H1 (cell line): ENCODE measurements at regions of chr12 and their contacts with region 1.

Region 1: GRCh38 chr12:108457006-108457733 is 57.9 kb upstream of the FICD start:
- DNase-seq: peak in 1 of 2 experiments; percentile 52
- H3K4me3 ChIP-seq: no peak overlapping the region
- H3K27ac ChIP-seq: no peak overlapping the region
- H3K4me1 ChIP-seq: peaks cover 0 to 3% (median 0%) of the 10 kb centered on the region in 4 experiments; a peak in 2 of 7 replicates
- H3K27me3 ChIP-seq: no peaks in the 10 kb centered on the region
- CTCF ChIP-seq: peak in 2 of 3 experiments; percentile 84 to 91; a peak in 3 of 4 replicates
- EP300 ChIP-seq: no peak
- POLR2A ChIP-seq: no peak
- RAD21 ChIP-seq: peak; percentile 87 to 94

Region 2: DNA sequence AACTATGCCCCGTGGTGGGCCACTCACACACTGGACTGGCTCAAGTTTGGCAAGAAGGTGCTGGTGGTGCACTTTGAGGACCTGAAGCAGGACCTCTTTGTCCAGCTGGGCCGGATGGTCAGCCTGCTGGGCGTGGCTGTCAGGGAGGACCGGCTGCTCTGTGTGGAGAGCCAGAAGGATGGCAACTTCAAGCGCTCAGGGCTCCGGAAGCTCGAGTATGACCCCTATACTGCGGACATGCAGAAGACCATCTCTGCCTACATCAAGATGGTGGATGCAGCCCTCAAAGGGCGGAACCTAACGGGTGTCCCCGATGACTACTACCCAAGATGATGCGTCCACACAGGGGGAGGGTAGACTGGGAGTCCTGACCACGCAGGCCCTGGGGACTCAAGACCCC is 209.2 kb before region 1 on chr12:
- CTCF ChIA-PET with region 1: interaction called, 12 read pairs
- POLR2A ChIA-PET with region 1: no interaction called
- DNase-seq: no peak
- H3K4me3 ChIP-seq: no peak overlapping the region
- H3K27ac ChIP-seq: no peak overlapping the region
- H3K4me1 ChIP-seq: peaks cover 0 to 7% (median 2%) of the 10 kb centered on the region in 4 experiments; a peak in 3 of 7 replicates
- H3K27me3 ChIP-seq: no peaks in the 10 kb centered on the region
- CTCF ChIP-seq: no peak
- EP300 ChIP-seq: no peak
- POLR2A ChIP-seq: no peak
- RAD21 ChIP-seq: no peak

Region 3: DNA sequence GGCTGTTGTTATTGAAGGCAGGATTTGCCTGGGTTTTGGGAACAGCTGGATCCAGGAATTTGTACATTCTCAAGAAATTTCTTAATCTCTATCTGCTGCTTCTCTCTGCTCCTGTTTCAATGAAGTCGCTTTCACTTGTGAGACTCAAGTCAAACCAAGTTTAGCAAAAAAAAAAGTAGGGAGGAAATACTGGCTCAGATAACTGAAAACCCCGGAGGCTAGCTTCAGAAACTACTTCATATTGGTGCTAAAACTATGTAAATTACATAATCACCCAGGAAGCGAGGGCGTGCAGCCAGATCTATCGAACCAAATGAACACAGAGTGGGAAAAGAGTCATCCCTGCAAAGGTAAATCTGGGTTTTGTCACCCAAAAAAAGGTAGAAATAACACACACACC is 10.4 kb before region 1 on chr12:
- CTCF ChIA-PET with region 1: interaction called, 25 read pairs
- POLR2A ChIA-PET with region 1: interaction called, 7 read pairs
- DNase-seq: no peak
- H3K4me3 ChIP-seq: no peak overlapping the region
- H3K27ac ChIP-seq: no peak overlapping the region
- H3K4me1 ChIP-seq: peaks cover 0 to 18% (median 10%) of the 10 kb centered on the region in 4 experiments; a peak in 6 of 7 replicates
- H3K27me3 ChIP-seq: no peaks in the 10 kb centered on the region
- CTCF ChIP-seq: no peak
- EP300 ChIP-seq: no peak
- POLR2A ChIP-seq: no peak
- RAD21 ChIP-seq: no peak

Region 4: GRCh38 chr12:108473400-108474055 is 16.4 kb after region 1 on chr12:
- CTCF ChIA-PET with region 1: interaction called, 18 read pairs
- POLR2A ChIA-PET with region 1: interaction called, 5 read pairs
- DNase-seq: no peak
- H3K4me3 ChIP-seq: no peak overlapping the region
- H3K27ac ChIP-seq: no peak overlapping the region
- H3K4me1 ChIP-seq: no peaks in the 10 kb centered on the region
- H3K27me3 ChIP-seq: no peaks in the 10 kb centered on the region
- CTCF ChIP-seq: no peak
- EP300 ChIP-seq: no peak
- POLR2A ChIP-seq: no peak
- RAD21 ChIP-seq: no peak